ENCODE measurements at regions of chr20 and their contacts with region 1.

Region 1: DNA sequence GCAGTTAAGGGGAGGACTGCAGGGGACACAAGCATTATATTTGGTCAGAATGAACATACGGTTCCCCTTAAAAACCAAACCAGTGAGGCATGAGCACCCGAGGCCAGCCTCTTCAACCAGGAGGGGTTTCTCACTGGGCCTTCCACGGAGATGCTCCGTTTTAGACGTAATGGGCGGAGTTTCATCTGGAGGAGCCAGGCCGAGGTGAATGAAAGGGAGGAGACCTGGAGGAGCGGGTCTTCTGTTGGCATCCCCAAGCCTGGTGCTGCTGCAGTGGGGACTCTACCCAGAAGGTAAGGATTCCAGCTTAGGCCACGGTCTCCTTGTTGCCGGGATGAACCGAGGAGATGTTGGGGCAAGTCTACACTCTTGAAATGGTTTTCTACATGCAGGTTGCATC is 47.4 kb downstream of the ADNP start:
- DNase-seq: no peak
- ATAC-seq: no peak
- H3K4me3 ChIP-seq: no peak overlapping the region
- H3K27ac ChIP-seq: no peak overlapping the region
- H3K4me1 ChIP-seq: no peaks in the 10 kb centered on the region
- H3K27me3 ChIP-seq: no peaks in the 10 kb centered on the region
- CTCF ChIP-seq: no peak

Region 2: DNA sequence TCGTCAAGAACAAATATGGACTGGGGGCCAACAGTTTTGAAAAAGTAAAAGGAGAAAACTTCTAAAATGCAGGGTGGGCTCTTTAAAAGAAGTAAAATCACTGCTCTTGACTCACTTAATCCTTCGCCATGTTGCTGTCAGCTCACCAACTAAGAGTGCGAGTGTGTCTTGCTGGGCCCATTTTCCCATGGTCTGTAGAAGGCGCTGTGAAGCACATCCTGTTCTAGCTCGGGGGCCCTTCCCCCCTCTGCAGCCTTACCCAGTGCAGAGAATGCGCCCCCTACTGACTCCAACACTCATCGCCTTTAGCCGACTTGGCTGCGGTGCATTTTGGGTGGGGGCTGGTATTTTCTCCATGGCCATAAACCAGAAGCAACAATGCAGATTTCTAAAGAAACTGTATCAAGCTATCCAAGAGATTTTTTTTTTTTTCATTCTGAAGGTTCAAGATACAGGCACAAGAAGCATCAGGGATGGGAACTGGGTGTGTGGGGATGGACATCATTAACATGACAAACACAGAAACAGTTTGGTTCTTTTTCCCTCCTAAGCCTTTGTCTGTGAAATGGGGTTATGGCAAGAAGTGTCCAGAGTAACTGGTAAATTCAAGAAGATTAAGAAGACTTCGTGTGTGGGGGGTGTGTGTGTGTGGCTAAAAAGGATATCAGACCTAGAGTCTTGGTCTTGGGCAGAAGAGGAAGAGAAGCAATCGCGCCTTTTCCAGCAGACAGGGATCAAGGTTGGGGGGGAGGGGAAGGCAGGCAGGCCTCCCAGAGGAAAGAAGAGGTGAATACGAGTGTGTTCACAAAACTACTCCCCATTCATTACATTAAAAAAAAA is 45.7 kb after region 1 on chr20:
- CTCF ChIA-PET with region 1: interaction called, 5 read pairs
- POLR2A ChIA-PET with region 1: interaction called, 11 read pairs
- in situ Hi-C with region 1: no loop called
- intact Hi-C with region 1: no loop called
- DNase-seq: peak; percentile 89
- ATAC-seq: peak; percentile 68
- H3K4me3 ChIP-seq: peak overlapping the region; percentile 59 to 90
- H3K27ac ChIP-seq: peak overlapping the region; percentile 92
- H3K4me1 ChIP-seq: peaks cover 28% of the 10 kb centered on the region
- H3K27me3 ChIP-seq: no peaks in the 10 kb centered on the region
- CTCF ChIP-seq: peak; percentile 99

Region 3: GRCh38 chr20:51050531-51051075 is 166.7 kb after region 1 on chr20:
- CTCF ChIA-PET with region 1: no interaction called
- POLR2A ChIA-PET with region 1: no interaction called
- in situ Hi-C with region 1: no loop called
- intact Hi-C with region 1: no loop called
- DNase-seq: no peak
- ATAC-seq: no peak
- H3K4me3 ChIP-seq: no peak overlapping the region
- H3K27ac ChIP-seq: no peak overlapping the region
- H3K4me1 ChIP-seq: no peaks in the 10 kb centered on the region
- H3K27me3 ChIP-seq: peaks cover 14% of the 10 kb centered on the region; the same call in 1 of the 2 replicates
- CTCF ChIP-seq: no peak